ENCODE measurements at regions of chr17 and their contacts with region 1.

Region 1: DNA sequence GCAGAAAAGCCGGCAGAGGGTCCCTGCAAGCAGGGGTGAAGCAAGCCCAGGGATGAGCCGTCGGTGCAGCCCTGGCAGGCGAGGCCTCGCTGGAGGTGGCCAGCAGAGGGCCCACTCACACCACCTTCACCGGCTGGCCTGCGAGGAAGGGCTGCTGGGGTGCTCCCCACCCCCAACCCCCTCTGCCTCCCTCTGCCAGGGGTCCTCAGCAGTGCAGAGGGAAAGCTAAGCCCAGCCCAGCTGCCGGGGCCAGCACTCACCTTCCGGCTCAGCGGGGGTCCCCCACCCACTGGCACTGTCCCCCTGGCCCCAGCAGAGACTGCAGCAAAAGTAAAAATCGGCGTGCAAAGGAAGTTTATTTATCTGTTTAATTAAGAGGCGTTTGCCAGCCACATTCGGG is 113.4 kb downstream of the ENGASE start:
- DNase-seq: peak; percentile 20
- H3K4me3 Mint-ChIP-seq: no peak overlapping the region
- H3K27ac Mint-ChIP-seq: no peak overlapping the region
- H3K4me1 Mint-ChIP-seq: no peaks in the 10 kb centered on the region
- H3K27me3 Mint-ChIP-seq: peaks cover 91% of the 10 kb centered on the region
- CTCF ChIP-seq: peak; percentile 82

Region 2: DNA sequence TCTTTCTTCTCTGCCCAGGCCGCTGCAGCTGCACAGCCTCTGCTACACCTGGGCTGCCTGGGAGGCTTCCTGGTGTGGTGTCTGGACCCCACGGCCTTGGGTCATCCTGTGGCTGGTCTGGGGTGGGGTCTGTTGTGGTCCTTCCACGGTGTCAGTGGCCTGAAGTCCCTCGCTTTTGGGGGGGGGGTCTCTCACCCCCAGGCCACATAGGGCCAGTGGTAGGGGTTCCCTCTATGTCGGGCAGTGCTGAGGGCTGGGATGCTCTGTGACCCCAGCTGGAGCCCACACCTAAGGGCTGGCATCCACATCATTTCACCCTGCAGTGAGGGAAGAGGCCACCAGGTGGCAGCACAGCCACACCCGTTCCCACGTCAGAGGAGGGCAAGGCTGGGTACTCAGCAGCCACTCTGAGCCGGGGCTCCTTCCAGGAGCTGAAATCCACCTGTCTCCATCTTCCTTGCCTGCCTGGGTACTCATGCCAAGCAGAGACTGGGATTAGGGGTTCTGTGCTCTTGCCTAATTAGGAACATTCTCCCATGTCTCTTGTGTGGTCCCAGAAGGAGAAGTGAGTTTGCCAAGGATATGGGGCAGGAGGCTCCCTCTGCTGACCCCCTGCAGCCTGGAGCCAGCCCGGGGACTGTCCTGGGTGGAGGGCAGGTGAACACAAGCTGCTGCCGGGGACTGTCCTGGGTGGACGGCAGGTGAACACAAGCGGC is 100.5 kb before region 1 on chr17:
- CTCF ChIA-PET with region 1: interaction called, 8 read pairs
- POLR2A ChIA-PET with region 1: no interaction called
- intact Hi-C with region 1: loop called (anchors 2 kb)
- DNase-seq: peak; percentile 70
- H3K4me3 Mint-ChIP-seq: no peak overlapping the region
- H3K27ac Mint-ChIP-seq: no peak overlapping the region
- H3K4me1 Mint-ChIP-seq: no peaks in the 10 kb centered on the region
- H3K27me3 Mint-ChIP-seq: peaks cover 7% of the 10 kb centered on the region
- CTCF ChIP-seq: peak; percentile 74

Region 3: DNA sequence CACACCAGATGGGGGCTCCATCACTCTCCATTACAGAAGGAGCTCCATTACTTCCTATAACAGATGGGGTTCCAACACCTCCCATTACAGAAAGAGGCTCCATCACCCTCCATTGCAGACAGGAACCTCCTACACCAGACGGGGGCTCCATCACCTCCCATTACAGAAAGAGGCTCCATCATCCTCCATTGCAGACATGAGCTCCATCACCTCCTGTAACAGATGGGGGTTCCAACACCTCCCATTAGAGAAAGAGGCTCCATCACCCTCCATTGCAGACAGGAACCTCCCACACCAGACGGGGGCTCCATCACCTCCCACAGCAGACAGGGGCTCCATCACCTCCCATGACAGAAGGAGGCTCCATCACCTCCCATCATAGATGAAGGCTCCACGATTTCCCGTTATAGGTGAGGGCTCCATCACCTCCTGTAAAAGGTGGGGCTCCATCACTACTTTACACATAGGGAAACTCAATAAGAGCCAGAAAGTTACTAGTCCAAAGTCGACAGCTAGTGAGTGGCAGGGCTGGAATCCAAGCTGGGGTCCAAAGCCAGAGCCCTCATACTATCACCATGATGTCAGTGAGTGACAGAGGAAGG is 198.0 kb after region 1 on chr17:
- CTCF ChIA-PET with region 1: interaction called, 212 read pairs
- POLR2A ChIA-PET with region 1: no interaction called
- intact Hi-C with region 1: loop called (anchors 1 kb)
- DNase-seq: no peak
- H3K4me3 Mint-ChIP-seq: no peak overlapping the region
- H3K27ac Mint-ChIP-seq: no peak overlapping the region
- H3K4me1 Mint-ChIP-seq: no peaks in the 10 kb centered on the region
- H3K27me3 Mint-ChIP-seq: peaks cover 73% of the 10 kb centered on the region
- CTCF ChIP-seq: no peak